ENCODE measurements at regions of chr5 and their contacts with region 1.

Region 1: GRCh38 chr5:17132444-17133083 is 84.9 kb upstream of the BASP1 start:
- DNase-seq: peak; percentile 49
- H3K4me3 Mint-ChIP-seq: no peak overlapping the region
- H3K27ac Mint-ChIP-seq: no peak overlapping the region
- H3K4me1 Mint-ChIP-seq: peaks cover 7% of the 10 kb centered on the region
- H3K27me3 Mint-ChIP-seq: no peaks in the 10 kb centered on the region
- CTCF ChIP-seq: peak; percentile 36

Region 2: GRCh38 chr5:16784843-16785791 is 347.4 kb before region 1 on chr5:
- CTCF ChIA-PET with region 1: interaction called, 10 read pairs
- POLR2A ChIA-PET with region 1: no interaction called
- intact Hi-C with region 1: no loop called
- DNase-seq: peak; percentile 51
- H3K4me3 Mint-ChIP-seq: no peak overlapping the region
- H3K27ac Mint-ChIP-seq: no peak overlapping the region
- H3K4me1 Mint-ChIP-seq: peaks cover 25% of the 10 kb centered on the region
- H3K27me3 Mint-ChIP-seq: no peaks in the 10 kb centered on the region
- CTCF ChIP-seq: no peak

Region 3: DNA sequence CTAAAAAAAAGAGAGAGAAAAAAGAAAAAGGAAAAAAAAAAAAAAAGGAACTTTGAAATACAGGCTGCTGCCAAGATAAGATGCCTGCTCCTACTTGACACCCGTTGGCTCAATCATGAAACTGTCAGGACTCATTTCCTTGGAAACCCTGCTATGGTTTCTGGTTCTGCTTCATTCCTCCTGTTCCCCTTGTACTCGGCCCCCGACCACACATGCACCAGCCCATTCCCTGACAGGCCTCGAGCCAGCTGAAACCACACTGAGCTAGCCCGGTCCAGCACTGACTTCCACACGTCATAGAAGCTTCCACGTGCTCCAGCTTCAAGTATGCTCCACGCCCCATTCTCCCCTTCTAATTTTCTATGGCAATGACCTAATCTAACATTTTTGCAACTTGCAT is 289.7 kb before region 1 on chr5:
- CTCF ChIA-PET with region 1: interaction called, 8 read pairs
- POLR2A ChIA-PET with region 1: no interaction called
- intact Hi-C with region 1: loop called (anchors 5 kb)
- DNase-seq: no peak
- H3K4me3 Mint-ChIP-seq: no peak overlapping the region
- H3K27ac Mint-ChIP-seq: no peak overlapping the region
- H3K4me1 Mint-ChIP-seq: no peaks in the 10 kb centered on the region
- H3K27me3 Mint-ChIP-seq: no peaks in the 10 kb centered on the region
- CTCF ChIP-seq: no peak

Region 4: GRCh38 chr5:16934123-16934522 is 198.4 kb before region 1 on chr5:
- CTCF ChIA-PET with region 1: interaction called, 44 read pairs
- POLR2A ChIA-PET with region 1: interaction called, 24 read pairs
- intact Hi-C with region 1: loop called (anchors 1 kb)
- DNase-seq: peak; percentile 80
- H3K4me3 Mint-ChIP-seq: peak overlapping the region; percentile 82
- H3K27ac Mint-ChIP-seq: no peak overlapping the region
- H3K4me1 Mint-ChIP-seq: peaks cover 34% of the 10 kb centered on the region
- H3K27me3 Mint-ChIP-seq: peaks cover 15% of the 10 kb centered on the region
- CTCF ChIP-seq: peak; percentile 90

Region 5: GRCh38 chr5:17143335-17143734 is 10.8 kb after region 1 on chr5:
- CTCF ChIA-PET with region 1: interaction called, 18 read pairs
- POLR2A ChIA-PET with region 1: interaction called, 3 read pairs
- intact Hi-C with region 1: no loop called
- DNase-seq: no peak
- H3K4me3 Mint-ChIP-seq: no peak overlapping the region
- H3K27ac Mint-ChIP-seq: no peak overlapping the region
- H3K4me1 Mint-ChIP-seq: peaks cover 13% of the 10 kb centered on the region
- H3K27me3 Mint-ChIP-seq: no peaks in the 10 kb centered on the region
- CTCF ChIP-seq: no peak

Region 6: GRCh38 chr5:17157916-17158529 is 25.5 kb after region 1 on chr5:
- CTCF ChIA-PET with region 1: interaction called, 22 read pairs
- POLR2A ChIA-PET with region 1: no interaction called
- intact Hi-C with region 1: no loop called
- DNase-seq: peak; percentile 72
- H3K4me3 Mint-ChIP-seq: no peak overlapping the region
- H3K27ac Mint-ChIP-seq: peak overlapping the region; percentile 25
- H3K4me1 Mint-ChIP-seq: peaks cover 31% of the 10 kb centered on the region
- H3K27me3 Mint-ChIP-seq: no peaks in the 10 kb centered on the region
- CTCF ChIP-seq: no peak

Region 7: GRCh38 chr5:17365811-17366138 is 233.2 kb after region 1 on chr5:
- CTCF ChIA-PET with region 1: no interaction called
- POLR2A ChIA-PET with region 1: no interaction called
- intact Hi-C with region 1: no loop called
- DNase-seq: no peak
- H3K4me3 Mint-ChIP-seq: no peak overlapping the region
- H3K27ac Mint-ChIP-seq: no peak overlapping the region
- H3K4me1 Mint-ChIP-seq: peaks cover 4% of the 10 kb centered on the region
- H3K27me3 Mint-ChIP-seq: no peaks in the 10 kb centered on the region
- CTCF ChIP-seq: no peak